CD8-positive, alpha-beta memory T cell (primary cell): ENCODE measurements at regions of chr22 and their contacts with region 1.

Region 1: DNA sequence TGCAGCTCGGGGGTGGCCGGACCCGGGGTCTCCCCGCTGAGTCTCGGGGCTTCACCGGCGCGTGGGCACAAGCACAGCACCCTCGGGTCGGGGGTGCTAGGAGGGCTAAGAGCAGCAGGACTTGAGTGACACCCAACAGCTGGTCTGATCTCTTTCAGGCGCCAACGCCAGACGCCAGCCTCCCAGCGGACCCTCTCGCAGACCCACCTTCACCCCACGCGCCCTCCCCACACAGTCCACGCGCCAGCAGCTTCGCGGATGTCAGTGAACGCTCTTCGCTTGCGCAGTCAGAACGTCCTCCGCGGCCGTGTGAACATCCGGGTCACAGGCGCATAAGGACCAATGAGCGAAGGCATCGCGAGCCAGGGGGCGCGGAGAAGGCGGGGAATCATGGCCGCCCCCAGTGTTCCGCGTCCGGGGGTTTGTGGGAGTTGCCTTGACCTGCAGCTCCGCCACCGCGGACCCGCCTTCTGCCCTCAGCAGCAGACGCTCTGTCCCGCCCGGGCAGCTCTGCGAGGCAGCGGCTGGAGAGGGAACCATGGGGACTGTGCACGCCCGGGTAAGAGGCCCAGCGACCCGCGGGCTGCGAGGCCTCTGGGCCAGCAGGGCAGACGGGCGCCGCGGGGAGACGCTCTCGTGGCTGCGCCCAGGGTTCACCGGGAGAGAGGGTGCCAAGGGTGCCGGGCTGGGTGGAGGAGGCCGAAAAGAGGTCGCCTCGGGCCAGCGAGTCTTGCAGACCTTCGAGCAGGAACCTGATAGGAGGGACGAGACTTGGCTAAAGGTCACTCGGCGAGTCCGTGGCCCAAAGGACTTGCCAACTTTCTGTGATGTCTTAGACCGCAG is at the start of gene SAMM50:
- DNase-seq: peak; percentile 87 to 94 (median 89)
- H3K4me3 ChIP-seq: peak within 1 kb of the TSS; percentile 84
- H3K4me3 Mint-ChIP-seq: peak within 1 kb of the TSS; percentile 93 to 99 (median 97)
- H3K27ac ChIP-seq: peak within 1 kb of the TSS; percentile 72
- H3K27ac Mint-ChIP-seq: peak within 1 kb of the TSS; percentile 86 to 99 (median 96)
- H3K4me1 ChIP-seq: peaks cover 25% of the 10 kb centered on the region
- H3K4me1 Mint-ChIP-seq: peaks cover 34 to 55% (median 50%) of the 10 kb centered on the region in 3 donors
- H3K27me3 ChIP-seq: no peaks in the 10 kb centered on the region
- H3K27me3 Mint-ChIP-seq: peaks cover under 1 to 2% of the 10 kb centered on the region in 2 donors
- total RNA-seq, gene SAMM50: 58.8 to 61.3 TPM

Region 2: DNA sequence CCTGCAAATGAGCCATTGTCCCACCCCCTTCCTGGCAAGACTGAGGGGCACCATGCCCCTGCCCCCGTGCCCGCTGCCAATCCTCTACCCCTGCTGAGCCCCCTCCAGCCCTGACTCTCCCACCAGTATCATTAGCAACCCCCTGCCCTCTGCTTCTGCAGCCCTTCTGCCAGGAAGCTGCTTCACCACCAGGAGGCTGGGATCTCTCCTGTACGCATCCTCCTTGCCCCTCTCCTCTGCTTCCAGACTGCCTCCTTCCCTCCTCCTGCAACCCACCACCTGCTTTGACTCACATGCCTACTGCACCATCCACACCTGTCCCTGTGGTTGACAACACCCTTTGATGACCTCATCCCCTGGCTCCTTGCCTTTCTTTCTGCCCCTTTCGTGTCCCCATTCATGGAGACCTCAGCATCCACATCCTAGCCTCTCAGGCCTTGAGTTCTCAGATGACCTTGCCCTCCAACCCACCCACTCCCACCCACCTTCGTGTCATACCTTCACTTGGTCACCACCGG is 45.0 kb before region 1 on chr22:
- CTCF ChIA-PET with region 1: no interaction called
- POLR2A ChIA-PET with region 1: no interaction called
- DNase-seq: no peak
- H3K4me3 ChIP-seq: no peak overlapping the region
- H3K4me3 Mint-ChIP-seq: no peak overlapping the region
- H3K27ac ChIP-seq: no peak overlapping the region
- H3K27ac Mint-ChIP-seq: no peak overlapping the region
- H3K4me1 ChIP-seq: no peaks in the 10 kb centered on the region
- H3K4me1 Mint-ChIP-seq: no peaks in the 10 kb centered on the region
- H3K27me3 ChIP-seq: no peaks in the 10 kb centered on the region
- H3K27me3 Mint-ChIP-seq: peaks cover 7 to 33% of the 10 kb centered on the region in 2 donors

Region 3: GRCh38 chr22:44664149-44664548 is 708.9 kb after region 1 on chr22:
- CTCF ChIA-PET with region 1: no interaction called
- POLR2A ChIA-PET with region 1: interaction called, 11 read pairs
- DNase-seq: peak; percentile 36 to 76 (median 50)
- H3K4me3 ChIP-seq: peak overlapping the region; percentile 49
- H3K4me3 Mint-ChIP-seq: peak overlapping the region; percentile 30 to 79 (median 60)
- H3K27ac ChIP-seq: peak overlapping the region; percentile 39
- H3K27ac Mint-ChIP-seq: peak overlapping the region; percentile 82 to 93 (median 87)
- H3K4me1 ChIP-seq: peaks cover 51% of the 10 kb centered on the region
- H3K4me1 Mint-ChIP-seq: peaks cover 49 to 67% (median 57%) of the 10 kb centered on the region in 3 donors
- H3K27me3 ChIP-seq: no peaks in the 10 kb centered on the region
- H3K27me3 Mint-ChIP-seq: no peaks in the 10 kb centered on the region